Activated CD8-positive, alpha-beta T cell treated with anti-CD3 and anti-CD28 coated beads for 36 hours (primary cell): ENCODE measurements at regions of chr1 and their contacts with region 1.

Region 1: DNA sequence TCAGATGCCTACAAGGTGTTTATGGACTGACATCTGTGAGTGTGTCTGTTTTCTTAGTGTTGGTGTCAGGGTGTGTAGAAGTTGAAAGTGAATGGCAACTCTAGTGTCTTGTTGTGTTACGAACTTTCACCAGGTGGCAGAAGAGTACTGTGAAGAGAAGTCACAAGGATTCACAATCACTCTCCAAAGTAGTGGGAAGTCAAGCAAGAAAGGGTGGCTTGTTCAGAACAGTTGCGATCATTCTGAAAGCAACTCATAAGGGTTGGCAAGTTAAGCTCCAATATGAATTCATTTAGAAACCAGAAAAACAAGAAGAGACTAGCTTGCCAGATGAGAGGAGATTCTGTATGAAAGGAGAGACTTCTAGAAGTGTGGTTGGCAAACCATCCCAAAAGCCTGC is 86.1 kb downstream of the FASLG start:
- DNase-seq: peak; percentile 56
- ATAC-seq: peak; percentile 85
- H3K4me3 Mint-ChIP-seq: no peak overlapping the region
- H3K27ac Mint-ChIP-seq: no peak overlapping the region
- H3K4me1 Mint-ChIP-seq: peaks cover 37% of the 10 kb centered on the region
- H3K27me3 Mint-ChIP-seq: peaks cover 9% of the 10 kb centered on the region
- CTCF ChIP-seq: peak; percentile 74

Region 2: DNA sequence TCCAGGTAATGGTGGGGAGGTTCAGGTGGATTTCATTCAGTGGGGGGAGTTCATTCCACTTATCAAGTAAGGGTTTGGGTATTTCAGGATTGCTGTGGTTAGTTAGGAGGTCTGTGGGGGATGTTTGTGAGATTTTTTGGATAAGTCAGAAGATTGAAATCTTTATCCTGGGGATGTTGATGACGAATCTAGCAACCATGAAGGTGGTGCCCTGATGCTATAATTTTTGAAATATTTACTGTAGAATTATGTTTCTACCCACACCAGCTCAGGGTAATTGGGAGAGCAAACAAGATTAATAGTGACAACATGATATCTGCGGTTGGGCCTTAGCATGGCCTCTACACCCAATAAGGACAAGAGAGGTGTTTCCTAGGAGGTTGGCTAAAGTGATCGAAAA is 183.8 kb before region 1 on chr1:
- CTCF ChIA-PET with region 1: no interaction called
- POLR2A ChIA-PET with region 1: no interaction called
- intact Hi-C with region 1: no loop called
- DNase-seq: no peak
- ATAC-seq: no peak
- H3K4me3 Mint-ChIP-seq: no peak overlapping the region
- H3K27ac Mint-ChIP-seq: no peak overlapping the region
- H3K4me1 Mint-ChIP-seq: peaks cover 13% of the 10 kb centered on the region
- H3K27me3 Mint-ChIP-seq: no peaks in the 10 kb centered on the region
- CTCF ChIP-seq: no peak

Region 3: DNA sequence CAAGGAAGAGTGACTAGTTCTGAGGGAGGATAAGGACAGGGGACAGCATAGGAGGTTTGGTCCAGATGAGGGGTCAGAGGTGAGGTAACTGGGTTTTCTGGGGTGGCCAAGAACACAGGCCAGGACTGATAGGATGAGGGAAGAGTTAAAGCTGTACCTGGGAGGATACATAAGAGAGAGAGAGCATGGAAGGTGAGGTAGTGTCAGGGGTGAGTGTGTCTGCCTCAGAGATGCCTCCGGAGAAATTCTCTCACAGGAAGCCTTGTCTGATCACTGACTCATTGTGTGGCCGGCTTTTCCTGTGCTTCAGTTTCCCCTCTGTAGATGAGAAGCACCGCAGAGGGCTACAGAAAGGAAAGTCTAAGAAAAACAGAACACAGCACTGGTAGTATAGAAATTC is 45.9 kb before region 1 on chr1:
- CTCF ChIA-PET with region 1: no interaction called
- POLR2A ChIA-PET with region 1: no interaction called
- intact Hi-C with region 1: no loop called
- DNase-seq: peak; percentile 87
- ATAC-seq: peak; percentile 80
- H3K4me3 Mint-ChIP-seq: peak overlapping the region; percentile 50
- H3K27ac Mint-ChIP-seq: peak overlapping the region; percentile 95
- H3K4me1 Mint-ChIP-seq: peaks cover 54% of the 10 kb centered on the region
- H3K27me3 Mint-ChIP-seq: no peaks in the 10 kb centered on the region
- CTCF ChIP-seq: no peak

Region 4: DNA sequence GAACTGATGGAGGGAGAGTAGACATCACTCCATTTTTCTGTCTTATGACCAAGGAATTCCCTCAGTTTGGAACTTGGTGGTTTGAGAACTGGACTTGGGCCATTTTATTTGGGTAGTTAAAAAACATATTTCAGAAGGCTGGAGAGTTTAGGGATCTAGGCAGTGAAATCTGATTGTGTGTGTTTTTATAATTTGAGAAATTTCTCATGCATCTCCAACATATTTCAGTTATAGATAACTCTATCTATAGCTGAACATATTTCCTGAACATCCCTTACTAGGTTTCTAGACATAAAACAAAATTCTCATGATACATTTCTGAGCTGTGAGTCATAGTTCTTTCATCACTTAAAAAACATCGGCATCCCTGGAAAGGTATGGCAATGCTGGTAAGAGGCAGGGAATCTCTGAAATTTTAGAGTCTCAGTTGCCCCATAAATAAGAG is 16.6 kb after region 1 on chr1:
- CTCF ChIA-PET with region 1: interaction called, 83 read pairs
- POLR2A ChIA-PET with region 1: no interaction called
- intact Hi-C with region 1: no loop called
- DNase-seq: no peak
- ATAC-seq: no peak
- H3K4me3 Mint-ChIP-seq: no peak overlapping the region
- H3K27ac Mint-ChIP-seq: no peak overlapping the region
- H3K4me1 Mint-ChIP-seq: peaks cover 73% of the 10 kb centered on the region
- H3K27me3 Mint-ChIP-seq: peaks cover 7% of the 10 kb centered on the region
- CTCF ChIP-seq: no peak

Region 5: DNA sequence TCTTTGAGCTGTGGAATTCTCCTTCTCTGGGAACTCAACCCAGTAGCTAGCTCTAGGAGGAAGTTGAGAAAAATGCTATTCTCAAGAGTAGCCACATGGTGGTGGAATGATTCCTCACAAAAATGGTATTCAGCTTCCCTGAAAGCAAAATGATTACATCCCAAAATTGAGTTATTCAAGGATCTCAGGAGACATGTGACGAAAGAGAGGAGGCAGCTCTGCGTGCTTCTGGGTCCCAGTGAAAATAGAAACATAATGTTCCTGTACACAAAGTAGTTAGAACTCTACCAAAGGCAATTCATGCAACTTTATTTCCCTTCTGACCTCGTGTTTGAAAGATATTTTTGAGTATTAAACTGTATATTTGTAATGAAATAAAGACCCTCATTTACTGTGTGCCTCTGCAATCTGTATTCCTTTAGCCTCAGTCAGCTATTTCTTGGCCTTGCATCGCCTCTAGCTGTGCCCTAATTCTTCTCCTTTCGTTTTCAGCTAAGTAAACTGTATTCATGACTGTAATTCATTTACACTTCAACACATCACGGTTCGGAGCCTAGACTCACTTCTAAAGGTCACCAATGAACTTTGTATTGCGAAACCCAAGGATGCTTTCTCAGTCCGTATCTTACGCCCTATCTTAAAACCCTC is 81.2 kb after region 1 on chr1:
- CTCF ChIA-PET with region 1: interaction called, 20 read pairs
- POLR2A ChIA-PET with region 1: no interaction called
- intact Hi-C with region 1: no loop called
- DNase-seq: peak; percentile 26
- ATAC-seq: peak; percentile 61
- H3K4me3 Mint-ChIP-seq: no peak overlapping the region
- H3K27ac Mint-ChIP-seq: no peak overlapping the region
- H3K4me1 Mint-ChIP-seq: peaks cover 2% of the 10 kb centered on the region
- H3K27me3 Mint-ChIP-seq: peaks cover 9% of the 10 kb centered on the region
- CTCF ChIP-seq: peak; percentile 72

Region 6: GRCh38 chr1:172966844-172967540 is 222.0 kb after region 1 on chr1:
- CTCF ChIA-PET with region 1: interaction called, 12 read pairs
- POLR2A ChIA-PET with region 1: no interaction called
- intact Hi-C with region 1: no loop called
- DNase-seq: peak; percentile 21
- ATAC-seq: peak; percentile 80
- H3K4me3 Mint-ChIP-seq: no peak overlapping the region
- H3K27ac Mint-ChIP-seq: no peak overlapping the region
- H3K4me1 Mint-ChIP-seq: peaks cover 19% of the 10 kb centered on the region
- H3K27me3 Mint-ChIP-seq: peaks cover 1% of the 10 kb centered on the region
- CTCF ChIP-seq: no peak

Region 7: GRCh38 chr1:173202430-173203145 is 457.6 kb after region 1 on chr1:
- CTCF ChIA-PET with region 1: interaction called, 192 read pairs
- POLR2A ChIA-PET with region 1: interaction called, 3 read pairs
- intact Hi-C with region 1: loop called (anchors 2 kb)
- DNase-seq: peak; percentile 26
- ATAC-seq: no peak
- H3K4me3 Mint-ChIP-seq: no peak overlapping the region
- H3K27ac Mint-ChIP-seq: no peak overlapping the region
- H3K4me1 Mint-ChIP-seq: peaks cover 45% of the 10 kb centered on the region
- H3K27me3 Mint-ChIP-seq: no peaks in the 10 kb centered on the region
- CTCF ChIP-seq: peak; percentile 84

Region 8: GRCh38 chr1:173409613-173410012 is 664.6 kb after region 1 on chr1:
- CTCF ChIA-PET with region 1: interaction called, 14 read pairs
- POLR2A ChIA-PET with region 1: no interaction called
- intact Hi-C with region 1: loop called (anchors 5 kb)
- DNase-seq: no peak
- ATAC-seq: no peak
- H3K4me3 Mint-ChIP-seq: no peak overlapping the region
- H3K27ac Mint-ChIP-seq: no peak overlapping the region
- H3K4me1 Mint-ChIP-seq: peaks cover 67% of the 10 kb centered on the region
- H3K27me3 Mint-ChIP-seq: no peaks in the 10 kb centered on the region
- CTCF ChIP-seq: no peak